ENCODE measurements at regions of chr15 and their contacts with region 1.

Region 1: GRCh38 chr15:78228356-78228996 is 5.9 kb downstream of the ACSBG1 start:
- DNase-seq: no peak
- ATAC-seq: no peak
- H3K4me3 ChIP-seq: no peak overlapping the region
- H3K27ac ChIP-seq: no peak overlapping the region
- H3K4me1 ChIP-seq: peaks cover 0 to 7% (median 5%) of the 10 kb centered on the region in 9 donors
- H3K27me3 ChIP-seq: no peaks in the 10 kb centered on the region
- CTCF ChIP-seq: no peak

Region 2: GRCh38 chr15:78257681-78258080 is 29.2 kb after region 1 on chr15:
- intact Hi-C with region 1: loop called in 1 of 10 experiments (anchors 1 kb)
- DNase-seq: no peak
- ATAC-seq: no peak
- H3K4me3 ChIP-seq: no peak overlapping the region
- H3K27ac ChIP-seq: no peak overlapping the region
- H3K4me1 ChIP-seq: no peaks in the 10 kb centered on the region
- H3K27me3 ChIP-seq: no peaks in the 10 kb centered on the region
- CTCF ChIP-seq: no peak